Heart left ventricle (tissue), 16 donors: ENCODE measurements at regions of chr20 and their contacts with region 1.

Region 1: GRCh38 chr20:2172305-2173175 is 70.9 kb downstream of the STK35 start:
- DNase-seq: peak; percentile 66 to 84 (median 71)
- ATAC-seq: peak; percentile 52 to 88 (median 82)
- H3K4me3 ChIP-seq: no peak overlapping the region
- H3K27ac ChIP-seq: no peak overlapping the region
- H3K4me1 ChIP-seq: peaks cover 0 to 15% (median 2%) of the 10 kb centered on the region in 12 donors
- H3K27me3 ChIP-seq: no peaks in the 10 kb centered on the region
- CTCF ChIP-seq: peak; percentile 78 to 96 (median 90)
- POLR2A ChIP-seq: no peak

Region 2: DNA sequence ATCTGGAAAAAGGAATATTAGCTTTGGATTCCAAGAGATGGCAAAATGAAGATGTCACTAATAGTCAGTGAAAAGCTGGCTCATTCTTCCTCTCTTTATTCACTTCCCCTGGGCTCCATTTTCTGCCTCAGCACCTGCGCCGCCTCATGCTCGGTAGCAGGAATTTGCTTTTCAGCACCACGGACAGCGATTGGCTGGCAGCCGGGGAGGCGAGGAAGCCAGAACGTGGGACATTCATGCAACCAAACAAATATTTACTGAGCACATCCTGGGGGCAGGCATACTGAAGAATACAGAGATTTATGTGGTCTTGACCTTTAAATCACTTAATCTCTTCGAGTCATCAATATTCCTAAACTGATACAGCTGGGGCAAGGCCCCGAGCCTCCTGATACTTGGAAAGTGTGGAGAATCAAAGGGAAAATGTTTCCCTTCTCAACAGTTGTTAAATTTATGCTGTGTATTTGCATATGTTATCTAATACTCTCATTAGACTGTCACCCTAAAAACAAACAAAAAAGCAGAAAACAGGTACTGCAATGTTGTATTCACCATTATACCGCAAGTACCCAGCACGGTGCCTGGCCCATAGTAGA is 166.6 kb before region 1 on chr20:
- intact Hi-C with region 1: loop called in 1 of 10 experiments (anchors 2 kb)
- DNase-seq: peak; percentile 60 to 80 (median 65)
- ATAC-seq: peak in 1 of 4 donors; percentile 44
- H3K4me3 ChIP-seq: no peak overlapping the region
- H3K27ac ChIP-seq: no peak overlapping the region
- H3K4me1 ChIP-seq: peaks cover 0 to 4% (median 0%) of the 10 kb centered on the region in 12 donors
- H3K27me3 ChIP-seq: peaks cover 0 to 42% (median 8%) of the 10 kb centered on the region in 9 donors
- CTCF ChIP-seq: no peak
- POLR2A ChIP-seq: no peak